A673 (cell line): ENCODE measurements at regions of chr9 and their contacts with region 1.

Region 1: DNA sequence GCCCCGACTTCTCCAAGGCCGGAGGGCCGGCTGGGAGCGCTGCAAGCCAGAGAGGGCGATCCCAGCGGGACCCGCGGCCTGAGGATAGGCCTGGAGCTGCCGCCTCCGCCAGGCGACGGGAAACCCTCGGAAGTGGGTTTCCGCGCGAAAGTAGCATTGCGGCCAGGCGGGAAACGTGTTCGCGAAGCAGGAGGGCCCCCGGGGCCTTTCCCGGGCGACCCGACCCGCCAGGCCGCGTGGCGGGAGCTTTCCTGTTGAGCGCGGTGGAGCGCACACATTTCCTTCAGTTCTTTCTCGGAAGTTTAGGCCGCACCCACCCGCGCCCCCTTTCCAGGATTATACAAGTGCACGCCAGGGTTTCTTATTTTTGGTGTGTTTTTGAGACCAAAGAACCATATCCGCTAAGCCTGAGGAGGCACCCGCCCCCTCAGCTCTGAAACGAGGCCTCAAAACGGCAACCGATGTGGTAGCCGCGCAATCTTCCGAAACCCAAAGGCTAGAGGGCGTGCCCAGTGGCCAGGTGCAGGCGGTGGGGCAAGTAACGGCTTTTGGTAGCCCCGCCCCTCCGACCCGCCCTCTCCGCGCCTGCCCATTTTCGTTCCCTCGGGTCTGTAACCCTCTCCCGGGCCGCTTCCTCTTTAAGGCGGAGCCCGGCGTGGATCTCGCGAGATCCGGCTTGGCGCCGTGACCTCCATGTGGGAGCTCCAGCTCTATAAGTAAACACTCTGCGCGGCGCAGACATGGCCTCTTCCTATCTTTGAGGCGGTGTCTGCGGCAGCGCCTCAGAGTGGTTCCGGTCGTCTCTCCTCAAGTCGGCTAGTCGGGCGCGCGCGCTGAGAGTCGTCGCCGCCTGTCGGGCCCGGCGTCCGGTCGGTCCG is at the start of gene UHRF2:
- DNase-seq: peak; percentile 99
- H3K4me3 ChIP-seq: peak within 1 kb of the TSS; percentile 97
- H3K27ac ChIP-seq: peak within 1 kb of the TSS; percentile 92
- H3K4me1 ChIP-seq: peaks cover 5% of the 10 kb centered on the region
- H3K27me3 ChIP-seq: peaks cover 32% of the 10 kb centered on the region
- CTCF ChIP-seq: no peak
- total RNA-seq, gene UHRF2: 52.7 and 53.0 TPM in 2 replicates

Region 2: DNA sequence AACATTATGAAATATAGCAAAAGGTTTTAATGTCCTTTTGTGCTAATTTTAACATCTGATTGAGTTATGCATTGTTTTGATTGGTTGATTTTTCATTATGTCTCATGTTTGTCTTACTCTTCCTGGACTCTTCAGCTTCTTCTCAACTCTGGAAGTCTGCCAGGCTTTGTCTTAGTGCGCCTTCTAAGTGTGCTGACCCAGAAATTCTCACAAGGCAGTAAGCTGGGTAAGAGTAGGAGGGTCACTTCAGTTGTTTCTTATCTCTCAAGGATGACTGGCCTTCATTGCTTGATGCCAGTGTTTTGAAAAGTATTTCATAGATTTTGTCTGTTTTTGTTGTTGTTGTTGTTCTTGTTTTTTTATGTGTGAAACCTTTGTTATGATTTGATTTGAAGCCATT is 724.6 kb before region 1 on chr9:
- CTCF ChIA-PET with region 1: no interaction called
- POLR2A ChIA-PET with region 1: interaction called, 18 read pairs
- intact Hi-C with region 1: no loop called
- DNase-seq: peak; percentile 39
- H3K4me3 ChIP-seq: no peak overlapping the region
- H3K27ac ChIP-seq: no peak overlapping the region
- H3K4me1 ChIP-seq: peaks cover 3% of the 10 kb centered on the region
- H3K27me3 ChIP-seq: no peaks in the 10 kb centered on the region
- CTCF ChIP-seq: no peak

Region 3: GRCh38 chr9:5832543-5833529 is 579.9 kb before region 1 on chr9 and contains the start of gene ERMP1:
- CTCF ChIA-PET with region 1: interaction called, 20 read pairs
- POLR2A ChIA-PET with region 1: no interaction called
- intact Hi-C with region 1: no loop called
- DNase-seq: peak; percentile 92
- H3K4me3 ChIP-seq: peak within 1 kb of the TSS; percentile 84
- H3K27ac ChIP-seq: peak within 1 kb of the TSS; percentile 69
- H3K4me1 ChIP-seq: peaks cover 9% of the 10 kb centered on the region
- H3K27me3 ChIP-seq: no peaks in the 10 kb centered on the region
- CTCF ChIP-seq: peak; percentile 85
- total RNA-seq, gene ERMP1: 11.1 and 11.5 TPM in 2 replicates

Region 4: DNA sequence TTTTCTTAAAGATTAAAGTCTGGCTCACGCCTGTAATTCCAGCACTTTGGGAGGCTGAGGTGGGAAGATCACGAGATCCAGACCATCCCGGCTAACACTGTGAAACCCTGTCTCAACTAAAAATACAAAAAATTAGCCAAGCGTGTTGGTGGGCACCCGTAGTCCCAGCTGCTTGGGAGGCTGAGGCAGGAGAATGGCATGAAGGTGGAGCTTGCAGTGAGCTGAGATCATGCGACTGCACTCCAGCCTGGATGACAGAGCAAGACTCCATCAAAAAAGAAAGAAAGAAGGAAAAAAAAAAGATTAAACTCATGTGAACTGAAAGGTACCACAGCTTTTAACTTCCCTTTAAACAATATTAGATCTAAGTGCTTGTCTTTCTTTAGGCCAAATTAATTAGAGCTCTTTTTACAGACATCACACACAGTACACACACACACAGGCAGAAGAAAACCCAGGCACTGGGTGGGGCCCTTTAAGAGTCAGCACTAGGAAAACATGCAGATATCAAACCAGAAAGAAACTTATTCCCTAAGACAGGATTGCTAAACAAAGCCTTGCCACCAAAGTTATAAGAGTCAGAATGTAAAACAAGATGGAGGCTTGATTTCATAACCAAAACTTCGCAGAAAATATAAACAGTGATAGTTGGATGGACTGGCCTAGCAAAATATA is 29.0 kb before region 1 on chr9:
- CTCF ChIA-PET with region 1: no interaction called
- POLR2A ChIA-PET with region 1: interaction called, 12 read pairs
- intact Hi-C with region 1: no loop called
- DNase-seq: no peak
- H3K4me3 ChIP-seq: no peak overlapping the region
- H3K27ac ChIP-seq: no peak overlapping the region
- H3K4me1 ChIP-seq: no peaks in the 10 kb centered on the region
- H3K27me3 ChIP-seq: no peaks in the 10 kb centered on the region
- CTCF ChIP-seq: no peak

Region 5: GRCh38 chr9:6399071-6399470 is 13.7 kb before region 1 on chr9:
- CTCF ChIA-PET with region 1: no interaction called
- POLR2A ChIA-PET with region 1: no interaction called
- intact Hi-C with region 1: no loop called
- DNase-seq: no peak
- H3K4me3 ChIP-seq: no peak overlapping the region
- H3K27ac ChIP-seq: no peak overlapping the region
- H3K4me1 ChIP-seq: no peaks in the 10 kb centered on the region
- H3K27me3 ChIP-seq: peaks cover 20% of the 10 kb centered on the region
- CTCF ChIP-seq: no peak